ENCODE measurements at regions of chr17 and their contacts with region 1.

Region 1: GRCh38 chr17:41801374-41802271 is 10.1 kb downstream of the P3H4 start:
- DNase-seq: peak; percentile 60 to 72 (median 64)
- H3K4me3 ChIP-seq: no peak overlapping the region
- H3K27ac ChIP-seq: no peak overlapping the region
- H3K4me1 ChIP-seq: peaks cover 0 to 16% (median 12%) of the 10 kb centered on the region in 4 experiments
- H3K27me3 ChIP-seq: no peaks in the 10 kb centered on the region

Region 2: DNA sequence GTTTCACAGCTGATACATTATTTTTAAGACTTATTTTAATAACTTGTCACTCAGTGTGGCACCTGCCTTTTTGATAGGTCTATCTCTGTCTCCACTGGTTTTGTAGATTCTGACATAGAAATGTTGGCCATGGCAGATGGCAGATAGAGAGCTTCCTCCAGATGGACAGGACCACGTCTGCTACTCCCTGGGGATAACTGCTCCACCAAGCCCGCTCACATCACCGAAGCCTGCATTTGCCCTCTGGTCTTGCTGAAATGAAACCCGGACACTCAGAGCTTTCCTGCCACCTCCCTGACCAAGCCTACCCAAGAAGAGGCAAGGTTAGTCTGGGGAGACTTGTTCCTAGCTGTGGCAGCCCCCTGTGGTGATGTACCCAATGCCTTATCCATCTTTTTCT is 50.8 kb before region 1 on chr17:
- CTCF ChIA-PET with region 1: interaction called, 13 read pairs
- POLR2A ChIA-PET with region 1: interaction called, 3 read pairs
- DNase-seq: no peak
- H3K4me3 ChIP-seq: no peak overlapping the region
- H3K27ac ChIP-seq: no peak overlapping the region
- H3K4me1 ChIP-seq: no peaks in the 10 kb centered on the region
- H3K27me3 ChIP-seq: no peaks in the 10 kb centered on the region

Region 3: GRCh38 chr17:41769985-41770594 is 31.5 kb before region 1 on chr17:
- CTCF ChIA-PET with region 1: interaction called, 20 read pairs
- POLR2A ChIA-PET with region 1: no interaction called
- DNase-seq: no peak
- H3K4me3 ChIP-seq: no peak overlapping the region
- H3K27ac ChIP-seq: no peak overlapping the region
- H3K4me1 ChIP-seq: peaks cover 0 to 20% (median 8%) of the 10 kb centered on the region in 4 experiments
- H3K27me3 ChIP-seq: no peaks in the 10 kb centered on the region

Region 4: DNA sequence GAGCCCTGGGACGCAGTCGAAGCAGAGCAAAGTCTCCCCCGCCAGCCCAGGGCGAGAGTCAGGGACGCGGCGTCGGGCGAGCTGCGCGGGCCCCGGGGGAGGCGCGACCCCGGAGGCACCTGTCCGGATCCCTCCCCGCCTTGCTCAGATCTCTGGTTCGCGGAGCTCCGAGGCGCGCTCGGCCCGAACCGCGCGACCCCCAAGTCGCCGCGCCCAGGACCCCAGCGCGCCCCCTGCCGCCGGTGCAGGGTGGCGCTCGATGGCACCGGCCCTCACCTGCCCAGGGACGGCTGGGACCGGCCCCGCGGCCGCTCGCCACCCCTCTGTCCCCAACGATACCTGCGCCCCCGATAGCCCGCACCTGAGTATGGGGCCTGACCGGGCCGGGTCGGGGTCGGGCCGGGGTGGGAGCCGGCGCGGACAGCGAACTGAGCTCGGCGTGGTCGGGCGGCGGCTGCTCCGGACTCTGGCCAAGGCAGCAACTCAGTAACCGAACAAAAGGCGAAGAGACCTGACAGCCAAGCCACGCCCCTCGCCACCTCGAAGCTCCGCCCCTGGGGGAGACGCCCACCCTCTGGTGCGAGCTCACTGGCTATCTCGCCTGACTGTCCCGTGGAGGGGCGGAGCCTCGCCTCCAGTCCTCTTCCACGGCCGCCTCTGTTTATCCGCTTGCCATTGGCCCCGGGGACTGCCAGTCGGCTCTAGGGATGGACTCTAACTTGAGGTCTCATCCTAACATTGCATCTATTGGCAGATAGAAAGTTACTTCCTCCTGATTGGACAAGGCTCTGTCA is 15.2 kb before region 1 on chr17 and contains the start of gene JUP:
- CTCF ChIA-PET with region 1: interaction called, 42 read pairs
- POLR2A ChIA-PET with region 1: interaction called, 6 read pairs
- DNase-seq: peak; percentile 99 to 100 (median 99)
- H3K4me3 ChIP-seq: peak within 1 kb of the TSS; percentile 72 to 91 (median 89)
- H3K27ac ChIP-seq: peak within 1 kb of the TSS; percentile 72 to 82
- H3K4me1 ChIP-seq: peaks cover 17 to 83% (median 65%) of the 10 kb centered on the region in 4 experiments
- H3K27me3 ChIP-seq: no peaks in the 10 kb centered on the region